ENCODE measurements at regions of chr22 and their contacts with region 1.

Region 1: GRCh38 chr22:46122511-46122971 is 27.8 kb upstream of the PPARA start:
- DNase-seq: peak; percentile 86
- ATAC-seq: peak; percentile 81
- H3K4me3 Mint-ChIP-seq: no peak overlapping the region
- H3K27ac Mint-ChIP-seq: no peak overlapping the region
- H3K4me1 Mint-ChIP-seq: no peaks in the 10 kb centered on the region
- H3K27me3 Mint-ChIP-seq: no peaks in the 10 kb centered on the region

Region 2: GRCh38 chr22:46006379-46007002 is 116.0 kb before region 1 on chr22:
- CTCF ChIA-PET with region 1: interaction called, 83 read pairs
- POLR2A ChIA-PET with region 1: no interaction called
- intact Hi-C with region 1: no loop called
- DNase-seq: peak; percentile 94
- ATAC-seq: peak; percentile 91
- H3K4me3 Mint-ChIP-seq: no peak overlapping the region
- H3K27ac Mint-ChIP-seq: no peak overlapping the region
- H3K4me1 Mint-ChIP-seq: peaks cover 7% of the 10 kb centered on the region
- H3K27me3 Mint-ChIP-seq: no peaks in the 10 kb centered on the region

Region 3: DNA sequence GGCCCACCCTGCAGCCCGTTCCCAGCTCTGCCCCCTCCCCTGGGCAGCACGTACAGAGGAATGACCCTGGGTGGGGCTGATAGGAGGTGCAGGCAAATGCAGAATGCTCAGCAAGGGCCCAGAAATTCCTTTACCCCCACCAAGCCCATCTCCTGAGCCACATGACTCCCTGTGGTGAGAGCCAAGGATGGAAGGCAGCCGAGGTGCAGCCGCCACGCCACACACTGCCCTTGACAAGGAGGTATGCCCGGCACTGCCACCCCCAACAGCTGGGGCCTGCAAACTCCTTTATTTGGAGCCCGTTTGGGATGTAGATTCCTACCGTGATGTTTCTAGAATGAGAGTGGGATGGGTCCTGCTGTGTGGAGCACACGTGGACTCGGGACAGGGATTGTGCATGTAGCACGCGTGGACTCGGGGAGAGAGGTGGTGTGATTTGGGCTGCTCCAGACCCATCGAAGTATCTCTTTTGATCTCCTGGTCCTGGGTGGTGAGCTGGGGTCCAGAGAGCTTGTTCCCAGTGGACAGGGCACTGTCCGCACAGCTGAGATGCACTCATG is 187.1 kb after region 1 on chr22:
- CTCF ChIA-PET with region 1: interaction called, 12 read pairs
- POLR2A ChIA-PET with region 1: no interaction called
- intact Hi-C with region 1: loop called (anchors 1 kb)
- DNase-seq: no peak
- ATAC-seq: no peak
- H3K4me3 Mint-ChIP-seq: no peak overlapping the region
- H3K27ac Mint-ChIP-seq: no peak overlapping the region
- H3K4me1 Mint-ChIP-seq: peaks cover 2% of the 10 kb centered on the region
- H3K27me3 Mint-ChIP-seq: no peaks in the 10 kb centered on the region

Region 4: GRCh38 chr22:46317646-46318045 is 195.1 kb after region 1 on chr22:
- CTCF ChIA-PET with region 1: interaction called, 21 read pairs
- POLR2A ChIA-PET with region 1: no interaction called
- intact Hi-C with region 1: loop called (anchors 1 kb)
- DNase-seq: no peak
- ATAC-seq: no peak
- H3K4me3 Mint-ChIP-seq: no peak overlapping the region
- H3K27ac Mint-ChIP-seq: no peak overlapping the region
- H3K4me1 Mint-ChIP-seq: no peaks in the 10 kb centered on the region
- H3K27me3 Mint-ChIP-seq: no peaks in the 10 kb centered on the region

Region 5: GRCh38 chr22:46335201-46336118 is 212.9 kb after region 1 on chr22 and contains the start of gene TRMU:
- CTCF ChIA-PET with region 1: interaction called, 3 read pairs
- POLR2A ChIA-PET with region 1: no interaction called
- intact Hi-C with region 1: loop called (anchors 1 to 5 kb)
- DNase-seq: peak; percentile 86
- ATAC-seq: peak; percentile 89
- H3K4me3 Mint-ChIP-seq: peak within 1 kb of the TSS; percentile 99
- H3K27ac Mint-ChIP-seq: peak within 1 kb of the TSS; percentile 94
- H3K4me1 Mint-ChIP-seq: peaks cover 35% of the 10 kb centered on the region
- H3K27me3 Mint-ChIP-seq: no peaks in the 10 kb centered on the region
- total RNA-seq, gene TRMU: 61.4 to 75.3 TPM

Region 6: DNA sequence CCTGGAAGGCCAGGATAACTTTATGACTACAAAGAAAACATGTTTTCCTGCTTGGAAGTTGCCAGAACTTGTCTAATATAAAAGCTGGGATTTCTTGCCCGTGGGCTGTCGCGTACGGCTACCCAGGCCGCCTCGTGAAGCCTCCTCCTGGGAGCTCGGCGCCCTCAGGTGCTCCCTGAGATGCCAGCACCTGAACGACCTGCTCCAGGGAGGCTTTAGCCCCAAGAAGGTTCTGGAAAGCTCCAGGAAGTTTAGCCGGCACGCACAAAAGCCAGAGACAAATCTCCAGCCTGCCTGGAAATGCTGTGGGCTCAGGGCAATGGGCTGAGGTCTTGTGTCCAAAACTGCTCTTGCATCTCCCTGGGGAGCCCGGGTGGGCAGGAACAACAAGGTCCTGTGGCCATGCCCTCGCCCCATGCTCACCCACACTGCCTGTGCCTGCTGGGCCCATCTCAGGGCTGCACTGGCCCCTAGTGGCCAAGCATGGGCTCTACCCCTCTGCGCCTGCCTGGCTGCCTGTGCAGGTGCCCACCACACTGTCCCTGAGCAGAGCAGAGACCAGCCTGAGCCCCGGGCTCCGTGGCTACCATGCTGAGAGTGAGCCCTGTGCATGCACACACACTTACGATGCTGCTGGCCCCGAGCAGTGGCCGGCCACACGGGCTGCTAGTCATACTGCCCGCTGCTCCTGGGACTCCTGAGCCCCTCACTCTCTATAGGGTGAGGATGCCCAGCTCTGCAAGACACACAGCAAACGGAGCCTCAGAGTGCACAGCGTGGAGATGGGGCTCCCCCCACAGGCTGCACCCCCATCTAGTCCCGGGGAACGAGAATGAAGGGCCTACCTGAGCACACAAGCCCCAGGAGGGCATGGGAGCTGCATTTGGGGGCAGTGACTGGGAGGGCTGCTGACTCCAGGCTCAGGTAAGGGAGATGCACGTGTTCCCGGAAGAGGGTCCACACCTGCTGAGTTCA is 419.8 kb after region 1 on chr22:
- CTCF ChIA-PET with region 1: interaction called, 5 read pairs
- POLR2A ChIA-PET with region 1: no interaction called
- intact Hi-C with region 1: loop called (anchors 1 to 5 kb)
- DNase-seq: peak; percentile 82
- ATAC-seq: peak; percentile 94
- H3K4me3 Mint-ChIP-seq: no peak overlapping the region
- H3K27ac Mint-ChIP-seq: no peak overlapping the region
- H3K4me1 Mint-ChIP-seq: peaks cover 11% of the 10 kb centered on the region
- H3K27me3 Mint-ChIP-seq: peaks cover 25% of the 10 kb centered on the region

Measured in activated CD4-positive, alpha-beta T cell treated with anti-CD3 and anti-CD28 coated beads for 36 hours (primary cell).